Activated T-helper 1 cell treated with anti-CD3 and anti-CD28 coated beads, Interleukin-12 subunit alpha, Interleukin-12 subunit beta, Interleukin-2, Interleukin-4 antibody, amounts not matched to agents 30 ng/mL and 10 ng/mL and 1 ng/mL, durations not matched to agents 14 hours and 24 hours and 36 hours (primary cell): ENCODE measurements at regions of chr6 and their contacts with region 1.

Region 1: DNA sequence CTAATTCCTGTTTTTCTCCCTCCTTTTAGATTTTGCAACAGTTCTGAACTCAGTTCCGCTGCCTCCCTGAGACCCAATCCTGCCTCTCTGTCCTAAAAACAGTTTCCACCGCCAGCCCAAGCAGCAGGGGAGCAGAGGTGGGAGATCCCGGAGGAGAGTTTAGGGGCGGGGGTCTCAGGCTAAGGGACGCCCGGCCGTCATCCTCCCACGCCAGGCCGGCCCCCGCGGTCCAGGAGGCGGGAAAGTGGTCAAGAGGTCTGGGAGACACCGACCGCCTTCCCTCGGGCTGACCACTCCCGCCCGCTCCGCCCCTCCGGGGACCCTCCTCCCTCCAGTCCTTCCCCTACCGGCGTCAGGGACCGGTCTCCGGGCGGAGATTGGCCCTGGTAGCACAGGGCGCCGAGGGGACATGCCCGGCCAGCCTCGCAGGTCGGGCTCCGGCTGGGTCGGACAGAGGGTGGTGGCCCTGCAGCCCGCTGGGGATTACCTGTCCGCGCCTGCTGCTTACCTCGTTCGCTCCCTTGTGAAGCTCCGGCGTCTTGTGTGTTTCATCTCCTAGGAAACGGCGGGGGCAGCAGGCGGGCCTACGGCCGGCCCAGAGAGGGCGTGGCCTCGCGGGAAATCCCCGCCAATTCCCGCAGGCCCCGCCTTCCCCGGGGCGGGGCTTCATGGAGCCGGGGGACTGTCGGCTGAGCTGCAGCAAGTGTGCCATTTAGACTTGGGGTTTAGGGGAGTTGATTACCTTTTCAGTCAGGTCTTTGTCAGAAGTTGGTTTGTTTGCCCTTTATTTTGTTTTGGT is at the start of gene MAK:
- DNase-seq: peak; percentile 88
- H3K4me3 Mint-ChIP-seq: peak within 1 kb of the TSS; percentile 85
- H3K27ac Mint-ChIP-seq: peak within 1 kb of the TSS; percentile 99
- H3K4me1 Mint-ChIP-seq: peaks cover 23% of the 10 kb centered on the region
- H3K27me3 Mint-ChIP-seq: peaks cover 32% of the 10 kb centered on the region
- total RNA-seq, gene MAK: 0.67 and 0.73 TPM in 2 replicates

Region 2: DNA sequence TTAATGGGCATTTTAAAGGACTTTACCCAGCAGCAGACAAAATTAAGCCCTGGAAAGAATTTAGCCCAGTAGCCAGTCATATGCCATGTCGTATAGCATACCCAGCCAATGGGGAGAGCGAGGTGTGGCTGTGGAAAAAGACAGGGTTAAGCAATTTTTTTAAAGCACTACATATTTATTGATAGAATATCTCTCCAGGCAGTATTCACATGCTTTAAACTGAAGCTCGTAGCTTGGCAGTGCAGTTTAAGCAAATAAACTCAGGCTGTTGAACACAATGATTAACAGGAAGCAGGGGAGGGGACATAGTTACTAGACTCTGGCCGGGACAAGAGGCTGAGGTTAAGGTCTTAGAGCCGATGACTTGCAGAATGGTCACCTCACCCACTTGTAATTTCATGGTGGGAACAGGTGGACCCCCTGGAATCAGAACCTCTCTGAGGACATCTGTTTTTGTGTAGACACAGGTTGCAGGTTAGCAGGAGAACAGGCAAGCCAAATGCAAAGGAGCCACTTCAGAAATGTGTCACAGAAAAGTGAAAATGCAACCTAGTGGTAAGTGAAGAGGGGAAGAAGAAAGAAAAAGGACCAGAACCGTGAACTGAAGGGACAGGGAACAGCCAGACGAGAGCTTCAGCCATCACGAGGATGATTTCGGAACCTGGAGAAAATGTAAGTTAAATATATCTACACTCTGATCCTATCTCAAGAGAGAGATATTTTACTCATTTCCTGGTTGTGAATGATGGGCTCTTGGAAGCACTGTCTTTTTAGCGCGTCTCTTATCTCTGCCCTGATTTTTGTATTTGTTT is 309.8 kb before region 1 on chr6:
- intact Hi-C with region 1: loop called (anchors 2 kb)
- DNase-seq: peak; percentile 41
- H3K4me3 Mint-ChIP-seq: peak overlapping the region; percentile 87
- H3K27ac Mint-ChIP-seq: peak overlapping the region; percentile 64
- H3K4me1 Mint-ChIP-seq: peaks cover 48% of the 10 kb centered on the region
- H3K27me3 Mint-ChIP-seq: peaks cover 5% of the 10 kb centered on the region

Region 3: GRCh38 chr6:10722820-10723566 is 115.2 kb before region 1 on chr6 and contains the start of gene TMEM14C:
- intact Hi-C with region 1: loop called (anchors 1 kb)
- DNase-seq: peak; percentile 88
- H3K4me3 Mint-ChIP-seq: peak within 1 kb of the TSS; percentile 91
- H3K27ac Mint-ChIP-seq: peak within 1 kb of the TSS; percentile 93
- H3K4me1 Mint-ChIP-seq: peaks cover 55% of the 10 kb centered on the region
- H3K27me3 Mint-ChIP-seq: no peaks in the 10 kb centered on the region
- total RNA-seq, gene TMEM14C: 57.3 and 63.1 TPM in 2 replicates

Region 4: DNA sequence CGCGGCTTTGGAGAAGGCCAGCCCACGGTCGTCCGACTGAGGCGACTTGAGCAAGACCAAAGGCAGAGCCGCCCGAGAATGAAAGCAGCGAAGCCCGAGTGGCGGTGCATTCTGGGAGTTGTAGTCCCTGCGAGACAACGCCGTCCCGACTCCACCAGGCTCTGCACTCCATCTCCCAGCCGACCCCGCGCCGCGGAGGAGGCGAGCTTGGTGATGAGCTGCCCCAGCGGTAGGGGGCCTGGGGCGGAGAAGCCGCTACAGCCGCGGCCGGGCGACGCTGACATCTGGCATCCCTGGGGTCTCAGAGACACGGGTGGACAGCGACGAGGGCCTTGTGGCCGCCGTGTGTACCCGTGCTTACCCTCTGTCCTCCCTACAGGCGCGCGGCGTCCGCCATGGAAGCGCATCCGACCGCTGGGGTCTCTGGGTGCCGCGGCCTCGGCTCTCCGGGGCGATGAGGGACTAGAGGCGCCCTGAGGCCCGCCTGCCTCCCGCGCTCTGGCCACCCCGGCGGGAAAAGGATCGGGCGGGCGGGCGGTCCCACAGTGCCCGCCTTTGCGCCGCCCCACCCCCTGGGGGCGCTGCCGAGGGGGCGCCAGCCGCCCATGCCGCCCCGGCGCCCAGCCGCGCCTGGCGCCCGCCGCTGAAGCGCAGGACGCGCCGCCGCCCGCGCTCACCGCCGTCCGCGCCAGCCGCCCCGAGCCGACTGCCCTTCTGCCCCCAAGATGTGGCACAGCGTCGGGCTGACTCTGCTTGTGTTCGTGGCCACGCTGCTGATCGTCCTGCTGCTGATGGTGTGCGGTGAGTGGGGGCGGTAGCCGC is 255.6 kb after region 1 on chr6 and contains the start of gene SMIM13:
- intact Hi-C with region 1: loop called (anchors 1 kb)
- DNase-seq: peak; percentile 94
- H3K4me3 Mint-ChIP-seq: peak within 1 kb of the TSS; percentile 92
- H3K27ac Mint-ChIP-seq: peak within 1 kb of the TSS; percentile 97
- H3K4me1 Mint-ChIP-seq: peaks cover 31% of the 10 kb centered on the region
- H3K27me3 Mint-ChIP-seq: no peaks in the 10 kb centered on the region
- total RNA-seq, gene SMIM13: 14.6 and 18.4 TPM in 2 replicates

Region 5: GRCh38 chr6:11298651-11299420 is 460.6 kb after region 1 on chr6:
- intact Hi-C with region 1: no loop called
- DNase-seq: no peak
- H3K4me3 Mint-ChIP-seq: no peak overlapping the region
- H3K27ac Mint-ChIP-seq: no peak overlapping the region
- H3K4me1 Mint-ChIP-seq: peaks cover 51% of the 10 kb centered on the region
- H3K27me3 Mint-ChIP-seq: no peaks in the 10 kb centered on the region

Region 6: GRCh38 chr6:11366183-11366933 is 528.2 kb after region 1 on chr6:
- intact Hi-C with region 1: loop called (anchors 5 kb)
- DNase-seq: peak; percentile 60
- H3K4me3 Mint-ChIP-seq: peak overlapping the region; percentile 55
- H3K27ac Mint-ChIP-seq: peak overlapping the region; percentile 92
- H3K4me1 Mint-ChIP-seq: peaks cover 95% of the 10 kb centered on the region
- H3K27me3 Mint-ChIP-seq: no peaks in the 10 kb centered on the region

Region 7: GRCh38 chr6:11732036-11732631 is 893.9 kb after region 1 on chr6:
- intact Hi-C with region 1: loop called (anchors 2 kb)
- DNase-seq: peak; percentile 25
- H3K4me3 Mint-ChIP-seq: peak overlapping the region; percentile 23
- H3K27ac Mint-ChIP-seq: peak overlapping the region; percentile 87
- H3K4me1 Mint-ChIP-seq: peaks cover 71% of the 10 kb centered on the region
- H3K27me3 Mint-ChIP-seq: no peaks in the 10 kb centered on the region

Region 8: DNA sequence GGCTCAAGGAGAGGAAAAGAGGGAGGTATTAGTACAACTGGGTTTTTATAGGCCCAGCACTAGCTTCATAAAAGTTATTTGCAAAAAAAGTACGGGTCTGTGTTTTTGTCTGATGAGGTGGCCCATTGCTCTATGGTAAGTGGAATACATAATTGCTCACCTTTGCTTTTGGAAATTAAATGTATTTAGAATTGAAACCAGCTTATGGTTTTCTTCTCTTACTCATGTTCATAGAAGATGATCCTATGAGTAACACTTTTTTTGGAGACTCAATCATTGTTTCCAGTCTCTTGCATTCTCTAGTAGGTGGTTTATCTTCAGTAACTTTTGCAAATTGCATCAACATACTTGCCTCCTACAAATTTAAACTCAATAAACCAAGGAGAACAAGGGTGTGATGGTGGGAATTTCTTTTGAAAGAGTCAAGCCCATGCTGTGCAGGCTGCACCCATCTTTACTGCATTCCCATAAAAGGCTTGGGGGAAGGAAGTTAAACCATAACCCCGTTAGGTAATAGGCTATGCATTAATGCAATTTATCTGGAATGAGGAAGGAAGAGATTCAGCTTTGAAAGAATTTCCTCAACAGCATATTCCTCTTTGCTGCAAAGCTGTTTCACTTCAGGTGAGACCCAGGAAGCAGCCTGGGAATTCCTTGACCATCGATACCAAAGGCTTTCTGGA is 1403.4 kb after region 1 on chr6:
- intact Hi-C with region 1: loop called (anchors 2 kb)
- DNase-seq: no peak
- H3K4me3 Mint-ChIP-seq: no peak overlapping the region
- H3K27ac Mint-ChIP-seq: peak overlapping the region; percentile 31
- H3K4me1 Mint-ChIP-seq: peaks cover 21% of the 10 kb centered on the region
- H3K27me3 Mint-ChIP-seq: peaks cover 6% of the 10 kb centered on the region